ENCODE measurements at regions of chr17 and their contacts with region 1.

Region 1: GRCh38 chr17:42221937-42222745 is 27.8 kb upstream of the GHDC start:
- H3K4me3 ChIP-seq: no peak overlapping the region
- H3K27ac ChIP-seq: no peak overlapping the region
- H3K4me1 ChIP-seq: no peaks in the 10 kb centered on the region; the same call in 1 of the 2 replicates
- CTCF ChIP-seq: peak; percentile 28; the same call in 1 of the 2 replicates

Region 2: GRCh38 chr17:42248351-42249179 is 26.4 kb after region 1 on chr17:
- CTCF ChIA-PET with region 1: interaction called, 24 read pairs
- POLR2A ChIA-PET with region 1: interaction called, 3 read pairs
- H3K4me3 ChIP-seq: no peak overlapping the region
- H3K27ac ChIP-seq: peak overlapping the region; percentile 19; the same call in 1 of the 2 replicates
- H3K4me1 ChIP-seq: peaks cover 10% of the 10 kb centered on the region; the same call in 1 of the 2 replicates
- CTCF ChIP-seq: no peak

Region 3: DNA sequence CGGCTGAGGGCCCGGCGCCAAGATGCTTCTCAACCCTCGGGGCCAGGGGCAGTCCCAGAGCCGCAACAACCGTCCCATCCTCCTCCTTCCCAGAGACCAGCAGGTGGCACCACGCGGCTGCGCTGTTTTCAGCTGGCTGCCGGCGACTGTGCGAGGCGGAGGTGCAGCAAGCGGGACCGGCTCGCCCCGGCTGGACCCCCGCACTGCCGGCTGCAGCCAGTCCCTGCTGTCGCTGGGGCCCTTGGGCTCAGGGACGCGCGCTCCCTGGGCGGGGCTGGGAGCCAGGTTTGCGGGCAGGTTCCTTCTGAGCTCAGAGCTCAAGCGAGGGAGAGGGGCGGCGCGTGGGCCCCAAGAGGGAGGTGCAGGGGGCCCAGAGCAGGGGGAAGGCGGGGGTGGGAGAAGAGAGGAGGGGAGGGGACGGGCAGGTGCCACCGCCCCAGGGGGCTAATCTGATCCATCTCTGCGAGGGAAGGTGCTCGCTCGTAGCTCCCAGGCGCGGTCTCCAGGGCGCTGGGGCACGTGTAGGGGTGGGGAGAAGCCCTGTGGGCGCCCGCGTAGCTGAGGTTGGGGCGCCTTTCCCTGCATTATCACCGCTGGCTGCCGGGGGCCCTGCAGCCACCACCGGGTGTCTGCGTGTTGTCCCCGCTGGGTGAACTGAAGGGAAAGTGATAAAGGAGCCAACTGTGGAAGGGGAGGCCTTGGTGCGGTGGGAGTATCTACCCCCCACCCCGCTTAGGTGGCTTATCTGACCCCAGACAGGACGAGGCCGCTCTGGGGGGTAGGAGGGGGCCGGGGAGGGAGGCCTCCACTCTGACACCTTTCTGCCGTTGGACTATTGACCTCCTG is 90.4 kb after region 1 on chr17:
- CTCF ChIA-PET with region 1: interaction called, 11 read pairs
- POLR2A ChIA-PET with region 1: no interaction called
- H3K4me3 ChIP-seq: no peak overlapping the region
- H3K27ac ChIP-seq: no peak overlapping the region
- H3K4me1 ChIP-seq: peaks cover 2% of the 10 kb centered on the region
- CTCF ChIP-seq: peak; percentile 58

Region 4: DNA sequence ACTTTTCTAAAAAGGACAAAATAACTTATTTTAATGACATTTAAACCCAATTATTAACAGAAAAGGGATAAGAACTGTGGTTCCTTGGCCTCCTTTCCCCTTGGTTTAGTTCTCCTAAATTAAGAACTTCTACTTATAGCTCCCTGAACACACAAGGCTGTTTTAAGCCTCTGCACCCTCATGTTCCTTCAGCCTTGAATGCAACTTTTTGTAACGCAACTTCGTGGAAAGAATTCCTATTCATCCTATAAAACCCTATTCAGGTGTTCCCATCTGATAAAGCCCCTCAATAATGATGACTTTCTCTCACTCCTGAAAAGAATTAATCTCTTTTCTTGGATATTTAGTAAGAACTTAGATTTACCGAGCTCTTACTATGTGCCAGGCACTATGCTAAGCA is 159.8 kb after region 1 on chr17:
- CTCF ChIA-PET with region 1: no interaction called
- POLR2A ChIA-PET with region 1: no interaction called
- H3K4me3 ChIP-seq: no peak overlapping the region
- H3K27ac ChIP-seq: no peak overlapping the region
- H3K4me1 ChIP-seq: peaks cover 16% of the 10 kb centered on the region
- CTCF ChIP-seq: no peak

Region 5: GRCh38 chr17:42405963-42406495 is 183.9 kb after region 1 on chr17:
- CTCF ChIA-PET with region 1: interaction called, 12 read pairs
- POLR2A ChIA-PET with region 1: interaction called, 9 read pairs
- H3K4me3 ChIP-seq: no peak overlapping the region
- H3K27ac ChIP-seq: no peak overlapping the region
- H3K4me1 ChIP-seq: 0 out of 2 replicates have a peak, but pooled peaks cover 3% of the 10 kb centered on the region
- CTCF ChIP-seq: peak; percentile 88